Tibial artery (tissue), 4 donors: ENCODE measurements at regions of chr1 and their contacts with region 1.

Region 1: GRCh38 chr1:151399890-151400495 is 620 bp downstream of the PSMB4 start:
- DNase-seq: no peak
- H3K4me3 ChIP-seq: peak overlapping the region; percentile 83 to 93
- H3K27ac ChIP-seq: peak overlapping the region; percentile 91
- H3K4me1 ChIP-seq: peaks cover 0 to 18% (median 15%) of the 10 kb centered on the region in 4 donors
- H3K27me3 ChIP-seq: no peaks in the 10 kb centered on the region
- CTCF ChIP-seq: no peak

Region 2: GRCh38 chr1:151309811-151310323 is 90.1 kb before region 1 on chr1:
- intact Hi-C with region 1: loop called (anchors 10 kb)
- DNase-seq: no peak
- H3K4me3 ChIP-seq: no peak overlapping the region
- H3K27ac ChIP-seq: peak overlapping the region; percentile 32 to 78
- H3K4me1 ChIP-seq: peaks cover 0 to 46% (median 33%) of the 10 kb centered on the region in 4 donors
- H3K27me3 ChIP-seq: no peaks in the 10 kb centered on the region
- CTCF ChIP-seq: no peak